IMR-90 (cell line): ENCODE measurements at regions of chr1 and their contacts with region 1.

Region 1: GRCh38 chr1:66446261-66447001 is 87.5 kb upstream of the SGIP1 start:
- DNase-seq: peak; percentile 76
- ATAC-seq: peak; percentile 73
- H3K4me3 ChIP-seq: no peak overlapping the region
- H3K27ac ChIP-seq: no peak overlapping the region
- H3K4me1 ChIP-seq: peaks cover 7% of the 10 kb centered on the region
- H3K27me3 ChIP-seq: no peaks in the 10 kb centered on the region
- CTCF ChIP-seq: peak; percentile 98
- POLR2A ChIP-seq: peak; percentile 59
- RAD21 ChIP-seq: peak; percentile 98

Region 2: GRCh38 chr1:65431111-65431705 is 1015.2 kb before region 1 on chr1:
- CTCF ChIA-PET with region 1: no interaction called
- POLR2A ChIA-PET with region 1: no interaction called
- dilution Hi-C with region 1: no loop called
- in situ Hi-C with region 1: loop called (anchors 10 kb)
- intact Hi-C with region 1: loop called (anchors 5 kb)
- DNase-seq: peak; percentile 55
- ATAC-seq: peak; percentile 53
- H3K4me3 ChIP-seq: no peak overlapping the region
- H3K27ac ChIP-seq: no peak overlapping the region
- H3K4me1 ChIP-seq: peaks cover 2% of the 10 kb centered on the region; the same call in 1 of the 2 replicates
- H3K27me3 ChIP-seq: no peaks in the 10 kb centered on the region
- CTCF ChIP-seq: peak; percentile 59
- POLR2A ChIP-seq: no peak
- RAD21 ChIP-seq: peak; percentile 62

Region 3: GRCh38 chr1:65820983-65821382 is 625.4 kb before region 1 on chr1:
- CTCF ChIA-PET with region 1: no interaction called
- POLR2A ChIA-PET with region 1: no interaction called
- dilution Hi-C with region 1: no loop called
- in situ Hi-C with region 1: no loop called
- intact Hi-C with region 1: loop called (anchors 10 kb)
- DNase-seq: peak; percentile 97
- ATAC-seq: peak; percentile 98
- H3K4me3 ChIP-seq: no peak overlapping the region
- H3K27ac ChIP-seq: no peak overlapping the region
- H3K4me1 ChIP-seq: peaks cover 5% of the 10 kb centered on the region
- H3K27me3 ChIP-seq: no peaks in the 10 kb centered on the region
- CTCF ChIP-seq: no peak
- POLR2A ChIP-seq: no peak
- RAD21 ChIP-seq: no peak

Region 4: GRCh38 chr1:66242646-66243547 is 203.5 kb before region 1 on chr1:
- CTCF ChIA-PET with region 1: interaction called, 14 read pairs
- POLR2A ChIA-PET with region 1: no interaction called
- dilution Hi-C with region 1: no loop called
- in situ Hi-C with region 1: no loop called
- intact Hi-C with region 1: no loop called
- DNase-seq: peak; percentile 87
- ATAC-seq: peak; percentile 87
- H3K4me3 ChIP-seq: no peak overlapping the region
- H3K27ac ChIP-seq: no peak overlapping the region
- H3K4me1 ChIP-seq: peaks cover 7% of the 10 kb centered on the region
- H3K27me3 ChIP-seq: no peaks in the 10 kb centered on the region
- CTCF ChIP-seq: peak; percentile 100; the same call in 1 of the 2 replicates
- POLR2A ChIP-seq: no peak
- RAD21 ChIP-seq: peak; percentile 95

Region 5: DNA sequence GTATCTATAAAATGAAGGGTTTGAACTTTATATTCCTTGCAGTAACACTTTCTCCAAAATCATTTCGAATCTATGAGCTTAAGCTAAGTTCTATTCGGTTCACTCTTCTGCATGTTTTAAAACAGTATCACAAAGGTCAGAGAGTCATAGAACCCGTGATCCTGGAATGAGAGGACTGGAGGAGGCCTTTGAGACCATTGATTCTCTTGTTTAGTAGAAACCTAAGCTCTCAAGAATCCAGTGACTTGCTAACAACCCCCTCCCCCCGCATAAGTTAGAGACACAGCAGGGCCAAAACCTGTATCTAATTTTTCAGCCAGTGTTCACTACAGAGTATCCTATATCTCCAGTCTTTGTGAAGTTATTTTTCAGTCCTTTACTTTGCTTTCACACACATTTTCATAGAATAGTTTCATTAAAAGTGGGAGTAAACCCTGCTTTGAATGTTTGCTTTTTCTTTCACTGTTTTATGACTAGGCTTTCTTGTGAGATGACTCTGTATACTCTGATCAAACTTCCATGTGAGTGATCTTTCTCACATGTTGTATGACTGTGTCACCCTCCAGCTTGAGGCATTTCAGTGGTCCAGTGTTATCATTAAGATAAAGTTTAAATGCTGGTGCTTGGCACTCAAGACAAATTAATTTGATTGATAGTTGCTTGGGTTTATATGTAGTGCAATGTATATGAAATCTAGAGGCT is 187.9 kb before region 1 on chr1:
- CTCF ChIA-PET with region 1: interaction called, 28 read pairs
- POLR2A ChIA-PET with region 1: no interaction called
- dilution Hi-C with region 1: loop called (anchors 10 kb)
- in situ Hi-C with region 1: no loop called
- intact Hi-C with region 1: loop called (anchors 1 kb)
- DNase-seq: peak; percentile 57
- ATAC-seq: peak; percentile 66
- H3K4me3 ChIP-seq: no peak overlapping the region
- H3K27ac ChIP-seq: peak overlapping the region; percentile 27; the same call in 1 of the 2 replicates
- H3K4me1 ChIP-seq: peaks cover 12% of the 10 kb centered on the region
- H3K27me3 ChIP-seq: no peaks in the 10 kb centered on the region
- CTCF ChIP-seq: no peak
- POLR2A ChIP-seq: no peak
- RAD21 ChIP-seq: no peak

Region 6: DNA sequence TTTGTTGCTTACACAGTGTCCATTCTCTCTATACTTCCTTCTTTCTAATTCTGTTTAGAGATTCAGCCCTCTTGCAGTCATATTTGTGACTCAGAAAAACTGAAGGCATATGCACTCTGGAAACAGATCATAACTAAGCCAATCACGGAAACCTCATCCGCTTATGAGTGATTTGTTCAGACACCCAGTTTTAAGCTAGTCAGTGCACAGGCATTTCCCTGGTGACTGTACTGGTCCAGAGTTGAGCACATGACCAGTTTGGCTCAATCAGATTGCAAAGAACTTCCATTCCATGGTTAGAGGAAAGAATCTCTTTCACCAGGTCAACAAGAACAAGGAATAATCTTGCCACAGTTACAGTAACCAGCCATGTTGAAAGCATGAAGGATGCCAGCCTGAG is 18.4 kb after region 1 on chr1:
- CTCF ChIA-PET with region 1: interaction called, 11 read pairs
- POLR2A ChIA-PET with region 1: no interaction called
- dilution Hi-C with region 1: no loop called
- in situ Hi-C with region 1: no loop called
- intact Hi-C with region 1: no loop called
- DNase-seq: peak; percentile 99
- ATAC-seq: peak; percentile 94
- H3K4me3 ChIP-seq: no peak overlapping the region
- H3K27ac ChIP-seq: peak overlapping the region; percentile 99
- H3K4me1 ChIP-seq: peaks cover 11% of the 10 kb centered on the region
- H3K27me3 ChIP-seq: no peaks in the 10 kb centered on the region
- CTCF ChIP-seq: no peak
- POLR2A ChIP-seq: no peak
- RAD21 ChIP-seq: no peak

Region 7: GRCh38 chr1:66725885-66726665 is 279.6 kb after region 1 on chr1:
- CTCF ChIA-PET with region 1: interaction called, 3 read pairs
- POLR2A ChIA-PET with region 1: no interaction called
- dilution Hi-C with region 1: no loop called
- in situ Hi-C with region 1: no loop called
- intact Hi-C with region 1: loop called (anchors 2 kb)
- DNase-seq: peak; percentile 81
- ATAC-seq: peak; percentile 70
- H3K4me3 ChIP-seq: no peak overlapping the region
- H3K27ac ChIP-seq: no peak overlapping the region
- H3K4me1 ChIP-seq: no peaks in the 10 kb centered on the region
- H3K27me3 ChIP-seq: no peaks in the 10 kb centered on the region
- CTCF ChIP-seq: peak; percentile 91
- POLR2A ChIP-seq: no peak
- RAD21 ChIP-seq: peak; percentile 75